Colonic mucosa (tissue), 4 donors: ENCODE measurements at regions of chr5 and their contacts with region 1.

Region 1: GRCh38 chr5:115246361-115246991 is 16.2 kb downstream of the PGGT1B start:
- DNase-seq: no peak
- H3K4me3 ChIP-seq: no peak overlapping the region
- H3K27ac ChIP-seq: no peak overlapping the region
- H3K4me1 ChIP-seq: no peaks in the 10 kb centered on the region
- H3K27me3 ChIP-seq: no peaks in the 10 kb centered on the region
- CTCF ChIP-seq: peak; percentile 65

Region 2: DNA sequence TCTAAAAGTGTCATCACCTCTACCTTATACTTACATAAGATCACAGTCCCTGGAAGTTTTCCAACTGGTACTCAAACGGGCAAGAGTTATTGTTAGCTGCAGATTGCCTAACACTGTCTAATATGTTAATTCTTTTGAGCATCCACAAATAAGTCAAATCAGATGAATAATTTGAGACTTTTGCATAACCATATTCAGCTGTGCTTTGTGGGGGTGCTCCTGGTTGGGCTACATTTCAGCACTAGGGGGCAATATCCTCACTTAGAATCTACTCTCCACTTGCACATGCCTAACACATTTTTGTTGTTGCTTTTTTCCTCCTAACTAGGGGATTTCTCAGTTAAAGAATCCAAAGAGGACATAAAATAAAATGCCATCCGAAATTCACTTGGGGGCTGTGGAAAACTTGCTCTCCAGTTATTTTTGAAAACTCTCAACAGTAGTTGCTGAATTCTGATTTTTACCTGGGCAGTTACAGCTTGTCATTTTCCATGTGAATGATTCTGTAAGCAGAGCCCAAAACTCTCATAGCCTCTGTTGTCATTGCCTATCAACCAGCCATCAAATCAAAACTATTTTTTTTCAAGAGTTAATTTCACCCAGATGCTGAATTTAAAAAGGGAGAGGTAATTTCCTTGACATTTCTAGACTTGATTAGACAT is 148.3 kb before region 1 on chr5:
- intact Hi-C with region 1: loop called (anchors 2 kb)
- DNase-seq: peak; percentile 49
- H3K4me3 ChIP-seq: no peak overlapping the region
- H3K27ac ChIP-seq: no peak overlapping the region
- H3K4me1 ChIP-seq: no peaks in the 10 kb centered on the region
- H3K27me3 ChIP-seq: no peaks in the 10 kb centered on the region
- CTCF ChIP-seq: peak; percentile 68